Lower lobe of right lung (tissue), 2 donors: ENCODE measurements at regions of chr16 and their contacts with region 1.

Region 1: GRCh38 chr16:75385507-75386152 is 47.7 kb downstream of the CFDP1 start:
- DNase-seq: no peak
- ATAC-seq: peak; percentile 67 to 72
- H3K4me3 ChIP-seq: no peak overlapping the region
- H3K27ac ChIP-seq: no peak overlapping the region
- H3K4me1 ChIP-seq: peaks cover 42% of the 10 kb centered on the region
- H3K27me3 ChIP-seq: no peaks in the 10 kb centered on the region
- CTCF ChIP-seq: peak; percentile 69

Region 2: GRCh38 chr16:75238132-75238852 is 147.3 kb before region 1 on chr16:
- intact Hi-C with region 1: loop called (anchors 10 kb)
- DNase-seq: peak; percentile 61
- ATAC-seq: peak; percentile 36 to 58
- H3K4me3 ChIP-seq: no peak overlapping the region
- H3K27ac ChIP-seq: peak overlapping the region; percentile 46
- H3K4me1 ChIP-seq: peaks cover 38% of the 10 kb centered on the region
- H3K27me3 ChIP-seq: no peaks in the 10 kb centered on the region
- CTCF ChIP-seq: no peak

Region 3: DNA sequence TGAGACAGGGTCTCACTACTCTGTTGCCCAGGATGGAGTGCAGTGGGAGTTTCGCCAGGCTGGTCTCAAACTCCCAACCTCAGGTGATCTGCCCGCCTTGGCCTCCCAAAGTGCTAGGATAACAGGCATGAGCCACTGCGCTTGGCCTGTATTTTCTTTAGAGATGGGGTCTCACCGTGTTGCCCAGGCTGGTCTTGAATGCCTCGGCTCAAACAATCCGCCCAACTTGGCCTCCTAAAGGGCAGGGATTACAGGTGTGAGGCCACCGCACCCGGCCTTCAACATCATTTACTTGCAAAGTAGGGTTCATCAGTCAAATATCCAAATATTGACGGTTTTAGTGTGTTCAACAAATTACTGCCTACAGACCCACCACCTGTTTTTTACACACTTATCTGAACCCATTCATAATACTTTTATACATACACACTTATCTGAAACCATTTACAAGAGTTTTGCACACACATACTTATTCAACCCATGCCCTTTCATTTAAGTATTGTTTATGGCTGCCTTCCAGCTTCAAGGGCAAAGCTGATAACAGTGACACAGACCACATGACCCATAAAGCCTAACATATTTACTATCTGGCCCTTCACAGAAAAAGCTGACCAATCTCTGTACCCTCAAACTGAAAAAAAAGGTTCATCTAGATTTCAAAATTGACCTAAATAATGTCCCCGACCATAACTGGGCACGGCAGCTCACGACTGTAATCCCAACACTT is 67.0 kb after region 1 on chr16:
- intact Hi-C with region 1: no loop called
- DNase-seq: no peak
- ATAC-seq: peak; percentile 35 to 70
- H3K4me3 ChIP-seq: no peak overlapping the region
- H3K27ac ChIP-seq: no peak overlapping the region
- H3K4me1 ChIP-seq: peaks cover 14% of the 10 kb centered on the region
- H3K27me3 ChIP-seq: no peaks in the 10 kb centered on the region
- CTCF ChIP-seq: no peak